ENCODE measurements at regions of chr4 and their contacts with region 1.

Region 1: DNA sequence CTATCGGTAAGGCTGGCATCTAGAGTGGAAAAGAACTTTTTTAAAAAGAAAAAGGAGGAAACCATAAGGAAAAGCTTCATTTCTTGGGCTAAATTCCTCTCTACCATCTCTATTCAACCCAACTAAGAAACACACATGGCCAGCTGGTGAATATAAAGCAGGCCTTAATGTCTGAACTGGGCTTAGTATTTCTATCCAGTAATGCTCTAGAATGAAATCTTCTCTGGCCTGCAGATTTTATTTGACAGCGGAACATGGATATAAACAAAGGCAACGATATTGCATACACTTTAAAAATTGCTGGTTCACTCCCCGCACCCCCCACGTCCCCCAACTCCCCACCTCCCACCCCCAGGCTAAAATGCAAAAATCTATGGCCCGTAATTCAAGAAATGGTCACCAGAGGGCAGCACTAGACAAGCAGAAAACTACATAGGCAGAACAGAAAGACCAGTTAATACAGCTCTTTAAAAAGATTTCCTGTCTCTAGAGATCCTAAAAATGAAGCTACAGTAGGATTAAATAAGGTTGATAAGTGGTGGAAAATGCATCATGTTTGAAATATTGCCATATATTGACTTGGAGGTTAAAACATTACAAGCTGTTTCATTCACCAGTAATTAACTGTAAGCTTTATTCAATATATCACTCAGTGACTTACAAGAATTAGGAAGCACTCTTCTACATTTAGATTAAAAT is 155.2 kb upstream of the GALNT7 start:
- DNase-seq: peak; percentile 46
- H3K4me3 Mint-ChIP-seq: no peak overlapping the region
- H3K27ac Mint-ChIP-seq: no peak overlapping the region
- H3K4me1 Mint-ChIP-seq: no peaks in the 10 kb centered on the region
- H3K27me3 Mint-ChIP-seq: no peaks in the 10 kb centered on the region
- CTCF ChIP-seq: peak; percentile 59

Region 2: DNA sequence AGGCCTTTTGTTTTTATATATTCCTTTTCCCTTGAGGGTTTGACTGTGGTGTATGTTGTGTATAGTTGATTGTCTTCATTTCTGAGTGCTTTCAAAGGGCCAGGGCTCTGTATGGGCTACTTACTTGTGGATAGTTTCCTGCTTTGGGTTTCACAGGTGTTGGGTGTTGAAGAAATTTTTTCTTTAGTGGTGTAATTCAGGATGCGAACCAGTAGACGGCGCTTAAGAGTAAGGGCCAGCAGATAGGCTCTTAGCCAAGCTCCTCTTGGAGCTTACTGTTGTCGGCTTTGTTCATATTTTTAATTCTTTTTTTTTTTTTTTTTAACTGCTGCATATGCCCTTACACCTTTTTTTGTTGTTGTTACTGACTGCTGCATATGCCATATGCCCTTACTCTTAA is 121.1 kb before region 1 on chr4:
- CTCF ChIA-PET with region 1: interaction called, 13 read pairs
- POLR2A ChIA-PET with region 1: no interaction called
- intact Hi-C with region 1: loop called (anchors 2 kb)
- DNase-seq: peak; percentile 51
- H3K4me3 Mint-ChIP-seq: no peak overlapping the region
- H3K27ac Mint-ChIP-seq: no peak overlapping the region
- H3K4me1 Mint-ChIP-seq: no peaks in the 10 kb centered on the region
- H3K27me3 Mint-ChIP-seq: peaks cover 21% of the 10 kb centered on the region
- CTCF ChIP-seq: peak; percentile 67

Region 3: DNA sequence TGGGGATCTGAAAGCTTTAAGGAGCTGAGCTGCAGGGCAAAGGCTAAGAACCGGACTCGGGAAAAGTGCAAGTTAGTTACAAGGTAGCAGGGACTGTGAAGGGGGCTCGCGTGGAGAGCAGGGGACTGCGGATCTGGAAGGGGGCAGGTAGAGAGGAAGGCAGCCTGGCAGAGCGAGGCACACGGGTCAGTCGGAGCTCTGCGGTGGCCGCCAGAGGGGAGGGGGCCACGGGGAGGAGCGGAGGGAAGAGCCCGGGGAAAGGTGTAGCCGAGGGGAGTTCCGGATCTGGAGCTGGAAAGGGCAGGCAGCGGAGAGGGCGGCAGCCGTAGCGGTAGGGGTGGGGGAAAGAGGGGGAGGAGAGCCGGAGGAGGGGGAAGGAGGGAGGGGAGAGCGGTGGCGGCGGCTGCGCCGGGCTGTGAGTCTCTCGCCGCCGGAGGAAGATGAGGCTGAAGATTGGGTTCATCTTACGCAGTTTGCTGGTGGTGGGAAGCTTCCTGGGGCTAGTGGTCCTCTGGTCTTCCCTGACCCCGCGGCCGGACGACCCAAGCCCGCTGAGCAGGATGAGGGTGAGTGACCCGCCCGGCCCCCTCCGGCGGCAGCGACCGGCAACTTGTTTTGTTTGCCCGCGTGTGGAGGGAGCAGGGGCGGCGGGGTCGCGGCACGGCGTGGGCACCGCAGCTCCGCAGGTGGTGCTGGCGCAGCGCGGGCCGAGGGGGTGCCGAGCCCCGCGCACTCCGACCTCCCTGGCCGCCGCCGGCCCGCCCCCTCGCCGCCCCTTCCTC is 155.2 kb after region 1 on chr4 and contains the start of gene GALNT7:
- CTCF ChIA-PET with region 1: interaction called, 16 read pairs
- POLR2A ChIA-PET with region 1: interaction called, 4 read pairs
- intact Hi-C with region 1: loop called (anchors 1 kb)
- DNase-seq: peak; percentile 73
- H3K4me3 Mint-ChIP-seq: peak within 1 kb of the TSS; percentile 100
- H3K27ac Mint-ChIP-seq: peak within 1 kb of the TSS; percentile 59
- H3K4me1 Mint-ChIP-seq: peaks cover 21% of the 10 kb centered on the region
- H3K27me3 Mint-ChIP-seq: no peaks in the 10 kb centered on the region
- CTCF ChIP-seq: no peak
- total RNA-seq, gene GALNT7: 13.7 and 19.9 TPM in 2 replicates

Region 4: DNA sequence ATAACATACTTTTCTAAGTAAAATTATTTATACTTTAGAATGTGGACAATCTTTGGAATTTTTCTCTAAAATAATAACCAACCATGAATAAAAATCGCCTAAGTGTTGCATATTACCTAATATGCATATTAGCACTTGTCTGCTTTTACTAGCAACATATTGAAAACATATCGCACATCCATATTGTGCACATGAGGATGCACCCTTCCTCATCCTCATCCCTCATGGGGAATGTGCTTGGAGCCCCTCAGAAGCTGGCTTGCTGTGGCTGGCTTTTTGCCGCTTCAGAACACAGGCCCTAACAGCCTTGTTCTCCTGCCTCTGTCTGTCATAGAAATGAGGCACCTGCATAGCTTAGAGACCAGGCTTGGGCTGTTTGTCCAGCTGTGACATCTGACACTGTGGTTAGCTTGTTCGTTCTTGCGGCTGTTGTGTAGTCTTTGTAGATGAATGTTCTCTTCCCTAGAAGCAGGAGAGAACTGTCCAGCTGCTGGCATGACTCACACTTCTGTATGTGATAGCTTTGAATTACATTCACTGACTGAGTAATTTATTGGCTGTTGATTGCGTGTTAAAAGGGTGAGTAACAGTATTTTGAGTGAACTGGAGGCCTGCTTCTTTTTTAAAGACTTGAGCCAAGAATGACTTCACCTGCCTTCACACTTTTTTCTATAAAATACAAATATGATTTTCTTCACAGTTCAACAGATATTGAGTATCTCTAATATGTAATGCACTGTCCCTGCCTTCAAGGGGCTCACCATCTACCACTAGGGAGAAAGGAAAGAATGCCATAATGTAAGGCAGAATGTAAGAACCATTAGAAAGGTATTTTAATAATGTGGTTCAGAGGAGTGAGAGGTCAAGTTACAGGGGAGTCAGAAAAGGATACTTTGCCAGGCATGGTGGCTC is 238.9 kb after region 1 on chr4:
- CTCF ChIA-PET with region 1: interaction called, 127 read pairs
- POLR2A ChIA-PET with region 1: interaction called, 11 read pairs
- intact Hi-C with region 1: loop called (anchors 1 kb)
- DNase-seq: peak; percentile 98
- H3K4me3 Mint-ChIP-seq: no peak overlapping the region
- H3K27ac Mint-ChIP-seq: peak overlapping the region; percentile 63
- H3K4me1 Mint-ChIP-seq: peaks cover 28% of the 10 kb centered on the region
- H3K27me3 Mint-ChIP-seq: no peaks in the 10 kb centered on the region
- CTCF ChIP-seq: no peak

Region 5: GRCh38 chr4:173277340-173277739 is 264.0 kb after region 1 on chr4:
- CTCF ChIA-PET with region 1: interaction called, 12 read pairs
- POLR2A ChIA-PET with region 1: no interaction called
- intact Hi-C with region 1: no loop called
- DNase-seq: no peak
- H3K4me3 Mint-ChIP-seq: no peak overlapping the region
- H3K27ac Mint-ChIP-seq: no peak overlapping the region
- H3K4me1 Mint-ChIP-seq: peaks cover 10% of the 10 kb centered on the region
- H3K27me3 Mint-ChIP-seq: no peaks in the 10 kb centered on the region
- CTCF ChIP-seq: no peak

Region 6: DNA sequence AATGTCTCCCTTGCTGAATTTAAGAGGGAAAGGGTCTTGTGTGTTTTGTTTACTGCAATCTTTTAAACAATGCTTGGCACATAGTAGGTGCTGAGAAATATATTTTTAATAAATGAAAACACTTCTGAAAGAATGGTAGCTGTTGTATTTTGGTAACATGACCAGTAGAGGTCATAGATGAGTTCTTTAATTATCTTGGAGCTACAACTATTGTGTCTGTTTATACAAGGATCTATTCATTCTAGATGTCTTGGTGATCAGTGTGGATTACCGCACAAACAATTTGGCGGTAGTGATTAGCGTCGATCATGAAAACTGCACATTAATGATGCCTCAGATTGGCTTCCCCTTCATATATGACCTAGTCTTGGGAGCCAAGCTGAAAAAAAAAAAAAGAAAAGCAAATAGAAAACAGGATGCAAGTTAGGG is 407.0 kb after region 1 on chr4:
- CTCF ChIA-PET with region 1: interaction called, 9 read pairs
- POLR2A ChIA-PET with region 1: interaction called, 5 read pairs
- intact Hi-C with region 1: loop called (anchors 2 kb)
- DNase-seq: peak; percentile 31
- H3K4me3 Mint-ChIP-seq: no peak overlapping the region
- H3K27ac Mint-ChIP-seq: no peak overlapping the region
- H3K4me1 Mint-ChIP-seq: peaks cover 15% of the 10 kb centered on the region
- H3K27me3 Mint-ChIP-seq: no peaks in the 10 kb centered on the region
- CTCF ChIP-seq: peak; percentile 39

Measured in MCF 10A (cell line).